Naive thymus-derived CD8-positive, alpha-beta T cell (primary cell): ENCODE measurements at regions of chr9 and their contacts with region 1.

Region 1: GRCh38 chr9:32550562-32551433 is 1.3 kb upstream of the SMIM27 start:
- DNase-seq: peak; percentile 93 to 99 (median 98)
- ATAC-seq: peak; percentile 82 to 86
- H3K4me3 Mint-ChIP-seq: peak overlapping the region; percentile 92 to 100 (median 98)
- H3K27ac Mint-ChIP-seq: peak overlapping the region; percentile 95 to 100 (median 99)
- H3K4me1 Mint-ChIP-seq: peaks cover 20 to 68% (median 61%) of the 10 kb centered on the region in 4 donors
- H3K27me3 Mint-ChIP-seq: no peaks in the 10 kb centered on the region

Region 2: DNA sequence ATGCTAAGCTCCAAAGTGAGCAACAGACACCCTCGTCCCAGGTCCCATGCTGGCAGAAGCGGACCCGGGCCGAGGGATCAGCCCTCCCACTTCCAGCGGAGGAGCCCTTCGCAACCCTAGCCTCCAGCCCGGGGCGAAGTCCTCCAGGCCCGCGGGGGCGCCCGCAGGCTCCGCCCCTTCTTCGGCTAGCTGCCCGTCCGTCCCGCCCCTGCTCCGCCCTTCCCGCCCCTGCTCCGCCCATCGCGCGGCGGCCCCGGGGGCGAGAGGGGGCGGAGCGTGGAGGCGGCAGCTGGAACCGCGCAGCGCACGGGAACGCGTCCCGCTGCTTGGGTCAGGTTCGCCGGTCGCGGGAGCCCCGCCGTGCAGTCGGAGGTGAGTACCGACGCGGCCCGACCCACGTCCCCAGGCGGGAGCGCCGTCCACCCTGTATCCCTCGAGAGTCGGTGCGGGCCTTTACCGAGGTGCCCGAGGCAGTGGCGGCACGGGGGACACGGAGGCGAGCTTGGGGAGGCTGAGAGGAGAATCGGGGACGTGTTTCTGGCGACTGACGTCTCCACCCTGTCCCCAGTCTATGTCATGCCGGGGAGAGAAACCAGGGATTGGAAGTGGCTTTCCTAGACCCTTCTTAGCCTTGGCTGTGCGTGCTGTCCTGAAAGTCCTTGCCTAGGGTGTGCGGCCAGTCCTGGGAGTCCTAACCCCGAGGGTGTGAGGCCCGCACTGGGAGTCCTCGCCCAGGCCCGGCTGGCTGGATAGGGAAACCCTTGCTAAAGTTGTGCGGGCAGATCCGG is 166.2 kb before region 1 on chr9 and contains the start of gene ACO1:
- POLR2A ChIA-PET with region 1: interaction called, 14 read pairs
- DNase-seq: peak; percentile 68 to 93 (median 84)
- ATAC-seq: peak; percentile 94
- H3K4me3 Mint-ChIP-seq: peak within 1 kb of the TSS; percentile 75 to 94 (median 88)
- H3K27ac Mint-ChIP-seq: peak within 1 kb of the TSS; percentile 24 to 83 (median 61)
- H3K4me1 Mint-ChIP-seq: peaks cover 5 to 31% (median 24%) of the 10 kb centered on the region in 4 donors
- H3K27me3 Mint-ChIP-seq: peaks cover 0 to 17% (median 5%) of the 10 kb centered on the region in 5 donors
- polyA plus RNA-seq, gene ACO1: 8.3 to 14.5 (median 13.1) TPM

Region 3: GRCh38 chr9:32526041-32526706 is 24.6 kb before region 1 on chr9 and contains the start of gene RIGI:
- POLR2A ChIA-PET with region 1: interaction called, 57 read pairs
- DNase-seq: peak; percentile 60 to 85 (median 78)
- ATAC-seq: peak; percentile 80 to 83
- H3K4me3 Mint-ChIP-seq: peak within 1 kb of the TSS; percentile 83 to 99 (median 96)
- H3K27ac Mint-ChIP-seq: peak within 1 kb of the TSS; percentile 94 to 99 (median 97)
- H3K4me1 Mint-ChIP-seq: peaks cover 15 to 56% (median 46%) of the 10 kb centered on the region in 4 donors
- H3K27me3 Mint-ChIP-seq: no peaks in the 10 kb centered on the region
- polyA plus RNA-seq, gene RIGI: 12.7 to 14.4 (median 14.1) TPM